Mammary epithelial cell (primary cell): ENCODE measurements at regions of chr3 and their contacts with region 1.

Region 1: GRCh38 chr3:66253790-66254620 is 33.2 kb downstream of the SLC25A26 start:
- DNase-seq: peak; percentile 11
- H3K4me3 ChIP-seq: no peak overlapping the region
- H3K27ac ChIP-seq: no peak overlapping the region
- H3K4me1 ChIP-seq: no peaks in the 10 kb centered on the region
- H3K27me3 ChIP-seq: no peaks in the 10 kb centered on the region
- CTCF ChIP-seq: peak; percentile 59 to 65

Region 2: GRCh38 chr3:65999606-66000005 is 254.4 kb before region 1 on chr3:
- CTCF ChIA-PET with region 1: no interaction called
- dilution Hi-C with region 1: no loop called
- in situ Hi-C with region 1: no loop called
- intact Hi-C with region 1: no loop called
- DNase-seq: no peak
- H3K4me3 ChIP-seq: no peak overlapping the region
- H3K27ac ChIP-seq: no peak overlapping the region
- H3K4me1 ChIP-seq: peaks cover 32% of the 10 kb centered on the region
- H3K27me3 ChIP-seq: no peaks in the 10 kb centered on the region
- CTCF ChIP-seq: no peak

Region 3: DNA sequence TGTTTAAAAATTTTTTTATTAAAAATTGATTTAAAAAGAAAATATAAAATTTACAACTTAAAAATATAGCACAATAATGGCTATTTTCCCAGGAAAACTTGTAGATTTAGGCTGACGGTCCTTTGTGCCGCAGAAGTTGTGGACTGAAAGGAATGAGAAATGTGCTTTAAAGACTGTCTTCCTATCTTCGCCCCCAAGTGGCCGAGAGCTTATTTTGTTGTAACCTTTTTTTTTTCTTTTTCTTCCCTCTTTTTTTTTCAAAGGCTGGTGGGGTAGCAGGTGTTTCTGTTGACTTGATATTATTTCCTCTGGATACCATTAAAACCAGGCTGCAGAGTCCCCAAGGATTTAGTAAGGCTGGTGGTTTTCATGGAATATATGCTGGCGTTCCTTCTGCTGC is 17.7 kb before region 1 on chr3:
- CTCF ChIA-PET with region 1: interaction called, 26 read pairs
- dilution Hi-C with region 1: no loop called
- in situ Hi-C with region 1: no loop called
- intact Hi-C with region 1: no loop called
- DNase-seq: no peak
- H3K4me3 ChIP-seq: no peak overlapping the region
- H3K27ac ChIP-seq: no peak overlapping the region
- H3K4me1 ChIP-seq: no peaks in the 10 kb centered on the region
- H3K27me3 ChIP-seq: no peaks in the 10 kb centered on the region
- CTCF ChIP-seq: no peak

Region 4: GRCh38 chr3:66816090-66816761 is 562.2 kb after region 1 on chr3:
- CTCF ChIA-PET with region 1: interaction called, 6 read pairs
- dilution Hi-C with region 1: no loop called
- in situ Hi-C with region 1: no loop called
- intact Hi-C with region 1: loop called (anchors 1 kb)
- DNase-seq: peak; percentile 13
- H3K4me3 ChIP-seq: no peak overlapping the region
- H3K27ac ChIP-seq: no peak overlapping the region
- H3K4me1 ChIP-seq: no peaks in the 10 kb centered on the region
- H3K27me3 ChIP-seq: no peaks in the 10 kb centered on the region
- CTCF ChIP-seq: peak; percentile 19 to 57

Region 5: DNA sequence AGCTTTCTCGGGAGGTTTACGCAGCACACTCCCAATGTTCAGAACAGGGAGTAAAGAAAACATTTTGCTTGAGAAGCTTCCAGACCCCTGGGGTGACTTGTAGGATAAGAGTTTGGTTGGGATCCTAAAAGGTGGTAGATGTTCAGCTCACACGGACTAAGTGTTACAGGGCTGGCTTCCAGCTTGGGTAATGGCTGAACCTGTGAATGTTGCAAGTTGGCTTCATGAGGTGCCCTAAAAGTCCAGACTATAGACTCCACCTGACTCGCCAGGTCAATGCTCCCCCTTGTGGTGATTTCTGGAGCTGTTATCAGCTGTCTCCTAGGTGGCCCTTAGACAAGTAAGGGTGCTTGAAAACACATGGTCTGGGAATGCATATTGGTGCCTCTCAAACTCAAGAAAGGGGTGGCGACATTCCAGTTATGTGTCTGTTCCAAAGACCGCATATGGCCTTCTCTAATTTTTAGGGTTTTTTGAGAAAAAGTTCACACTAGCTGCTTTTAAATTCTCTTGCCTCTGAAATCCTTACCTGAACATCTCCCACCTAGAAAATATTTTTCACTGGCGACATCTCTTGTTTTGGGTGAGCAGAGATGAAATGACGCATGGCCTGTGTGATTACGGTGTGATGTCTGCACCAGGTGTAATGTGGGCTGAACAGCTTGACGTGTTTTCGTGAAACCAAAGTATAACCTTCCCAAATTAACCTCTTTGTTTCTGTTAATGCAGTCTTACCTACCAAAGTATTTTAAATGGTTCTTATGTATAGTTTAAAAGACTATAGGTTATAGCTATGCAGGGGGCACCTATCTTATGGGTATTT is 568.4 kb after region 1 on chr3:
- CTCF ChIA-PET with region 1: interaction called, 5 read pairs
- dilution Hi-C with region 1: no loop called
- in situ Hi-C with region 1: no loop called
- intact Hi-C with region 1: loop called (anchors 1 kb)
- DNase-seq: peak; percentile 55
- H3K4me3 ChIP-seq: no peak overlapping the region
- H3K27ac ChIP-seq: no peak overlapping the region
- H3K4me1 ChIP-seq: no peaks in the 10 kb centered on the region
- H3K27me3 ChIP-seq: peaks cover 2% of the 10 kb centered on the region
- CTCF ChIP-seq: peak; percentile 74 to 86